H1 (cell line): ENCODE measurements at regions of chr3 and their contacts with region 1.

Region 1: DNA sequence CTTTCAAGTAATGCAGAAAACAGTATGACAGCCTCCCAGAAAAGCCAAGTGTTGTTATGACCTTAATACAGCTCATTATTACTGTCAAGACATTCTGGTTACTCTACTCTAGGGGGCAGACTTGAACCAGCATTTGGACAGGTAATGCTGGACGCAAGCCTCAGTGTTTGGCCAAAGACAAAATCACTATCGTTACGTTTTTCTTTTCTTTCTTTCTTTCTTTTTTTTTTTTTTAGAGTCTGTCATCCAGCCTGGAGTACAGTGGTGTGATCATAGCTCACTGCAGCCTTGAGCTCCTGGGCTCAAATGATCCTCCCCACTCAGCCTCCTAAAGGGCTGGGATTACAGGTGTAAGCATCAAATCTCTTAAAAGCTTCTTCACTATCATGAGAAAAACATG is 29.4 kb upstream of the TMEM45A start:
- DNase-seq: no peak
- H3K4me3 ChIP-seq: no peak overlapping the region
- H3K27ac ChIP-seq: no peak overlapping the region
- H3K4me1 ChIP-seq: no peaks in the 10 kb centered on the region
- H3K27me3 ChIP-seq: no peaks in the 10 kb centered on the region; a peak in 1 of 7 replicates
- CTCF ChIP-seq: peak in 2 of 3 experiments; percentile 79 to 80; a peak in 3 of 4 replicates
- EP300 ChIP-seq: no peak
- POLR2A ChIP-seq: no peak
- RAD21 ChIP-seq: peak; percentile 95 to 98

Region 2: DNA sequence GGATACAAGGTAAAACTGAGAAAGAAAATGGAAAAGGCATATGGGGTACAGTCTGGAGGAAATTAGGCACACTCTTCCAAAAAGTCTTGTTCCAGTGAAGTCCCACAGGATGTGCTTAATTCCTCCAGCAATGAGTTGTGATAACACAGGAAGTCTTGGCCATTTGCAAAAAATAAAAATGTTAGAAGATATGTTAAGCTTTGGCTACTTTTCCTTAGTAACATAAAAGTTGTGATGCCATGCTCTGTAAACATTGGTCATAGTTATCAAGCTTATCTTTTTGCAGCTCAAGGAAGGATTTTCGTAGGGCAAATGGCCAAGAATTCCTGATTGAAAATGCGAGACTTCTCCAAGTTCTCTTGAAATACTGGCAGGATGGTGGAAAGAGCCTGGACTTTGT is 35.3 kb before region 1 on chr3:
- CTCF ChIA-PET with region 1: no interaction called
- POLR2A ChIA-PET with region 1: no interaction called
- DNase-seq: no peak
- H3K4me3 ChIP-seq: no peak overlapping the region
- H3K27ac ChIP-seq: no peak overlapping the region
- H3K4me1 ChIP-seq: no peaks in the 10 kb centered on the region
- H3K27me3 ChIP-seq: no peaks in the 10 kb centered on the region
- CTCF ChIP-seq: no peak
- EP300 ChIP-seq: no peak
- POLR2A ChIP-seq: no peak
- RAD21 ChIP-seq: no peak

Region 3: DNA sequence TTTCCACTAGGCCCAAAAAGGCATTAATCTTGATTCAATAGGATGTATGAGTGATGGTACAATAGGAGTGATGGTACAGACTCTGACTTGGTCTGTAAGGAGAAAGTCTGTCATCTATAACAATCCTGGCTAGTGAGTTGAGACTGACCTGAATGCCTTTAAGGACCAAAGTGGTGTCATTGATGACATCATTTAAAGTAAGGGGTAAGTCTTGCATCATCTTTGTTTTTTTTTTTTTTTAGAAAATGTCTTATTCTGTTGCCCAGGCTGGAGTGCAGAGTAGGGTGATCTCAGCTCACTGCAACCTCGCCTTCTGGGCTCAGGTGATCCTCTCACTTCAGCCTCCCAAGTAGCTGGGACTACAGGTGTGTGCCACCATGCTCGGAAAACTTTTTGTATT is 23.8 kb after region 1 on chr3:
- CTCF ChIA-PET with region 1: interaction called, 18 read pairs
- POLR2A ChIA-PET with region 1: no interaction called
- DNase-seq: no peak
- H3K4me3 ChIP-seq: no peak overlapping the region
- H3K27ac ChIP-seq: no peak overlapping the region
- H3K4me1 ChIP-seq: peaks cover 0 to 3% (median 1%) of the 10 kb centered on the region in 4 experiments; a peak in 2 of 7 replicates
- H3K27me3 ChIP-seq: no peaks in the 10 kb centered on the region
- CTCF ChIP-seq: no peak
- EP300 ChIP-seq: no peak
- POLR2A ChIP-seq: no peak
- RAD21 ChIP-seq: no peak

Region 4: DNA sequence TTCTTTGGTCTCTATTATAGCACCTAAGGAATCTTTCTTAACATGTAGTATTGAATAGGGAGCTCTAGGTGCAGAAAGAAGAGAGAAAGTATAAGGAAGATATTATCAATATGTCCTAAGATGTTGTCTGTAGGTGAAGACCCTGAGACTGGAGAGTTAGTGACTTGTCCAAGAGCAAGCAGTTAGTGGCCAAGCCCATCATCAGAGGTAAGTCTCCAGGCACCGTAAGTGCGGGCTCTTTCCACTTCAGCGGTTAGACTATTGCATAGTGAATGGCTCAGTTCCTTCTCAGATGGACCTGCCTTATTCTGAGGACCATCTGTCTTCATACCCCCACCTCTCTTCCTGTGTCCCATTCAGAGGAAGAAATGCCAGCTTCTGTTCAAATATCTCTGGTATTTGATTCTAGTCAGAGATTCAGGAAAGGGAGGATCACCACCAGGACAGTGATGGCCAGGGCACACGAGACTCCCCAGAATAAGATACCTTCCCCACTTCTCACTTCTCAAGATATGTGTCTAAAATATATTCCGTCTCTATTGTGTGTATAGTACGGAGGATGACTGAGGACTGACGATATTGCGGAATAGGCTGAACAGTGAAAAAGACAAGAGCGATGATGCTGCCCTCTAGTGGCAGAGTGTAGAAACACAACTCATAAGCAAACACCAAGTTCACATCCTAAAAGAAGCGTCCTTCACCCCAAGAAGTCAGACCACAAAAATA is 127.3 kb after region 1 on chr3:
- CTCF ChIA-PET with region 1: interaction called, 229 read pairs
- POLR2A ChIA-PET with region 1: no interaction called
- DNase-seq: peak in 1 of 2 experiments; percentile 67
- H3K4me3 ChIP-seq: peak overlapping the region in 1 of 4 experiments; percentile 37; a peak in 1 of 8 replicates
- H3K27ac ChIP-seq: no peak overlapping the region
- H3K4me1 ChIP-seq: peaks cover 0 to 3% (median 0%) of the 10 kb centered on the region in 4 experiments; a peak in 1 of 7 replicates
- H3K27me3 ChIP-seq: peaks cover 0 to 1% (median 0%) of the 10 kb centered on the region in 4 experiments; a peak in 1 of 7 replicates
- CTCF ChIP-seq: peak in 2 of 3 experiments; percentile 71 to 92; a peak in 3 of 4 replicates
- EP300 ChIP-seq: no peak
- POLR2A ChIP-seq: no peak
- RAD21 ChIP-seq: peak; percentile 91 to 93

Region 5: GRCh38 chr3:100776746-100777145 is 313.7 kb after region 1 on chr3:
- CTCF ChIA-PET with region 1: interaction called, 10 read pairs
- POLR2A ChIA-PET with region 1: no interaction called
- DNase-seq: peak in 1 of 2 experiments; percentile 63
- H3K4me3 ChIP-seq: no peak overlapping the region
- H3K27ac ChIP-seq: no peak overlapping the region
- H3K4me1 ChIP-seq: no peaks in the 10 kb centered on the region
- H3K27me3 ChIP-seq: peaks cover 0 to 1% (median 0%) of the 10 kb centered on the region in 4 experiments; a peak in 1 of 7 replicates
- CTCF ChIP-seq: peak; percentile 53 to 73 (median 65)
- EP300 ChIP-seq: no peak
- POLR2A ChIP-seq: no peak
- RAD21 ChIP-seq: peak; percentile 43 to 65